HEK293 (cell line): ENCODE measurements at regions of chr10 and their contacts with region 1.

Region 1: DNA sequence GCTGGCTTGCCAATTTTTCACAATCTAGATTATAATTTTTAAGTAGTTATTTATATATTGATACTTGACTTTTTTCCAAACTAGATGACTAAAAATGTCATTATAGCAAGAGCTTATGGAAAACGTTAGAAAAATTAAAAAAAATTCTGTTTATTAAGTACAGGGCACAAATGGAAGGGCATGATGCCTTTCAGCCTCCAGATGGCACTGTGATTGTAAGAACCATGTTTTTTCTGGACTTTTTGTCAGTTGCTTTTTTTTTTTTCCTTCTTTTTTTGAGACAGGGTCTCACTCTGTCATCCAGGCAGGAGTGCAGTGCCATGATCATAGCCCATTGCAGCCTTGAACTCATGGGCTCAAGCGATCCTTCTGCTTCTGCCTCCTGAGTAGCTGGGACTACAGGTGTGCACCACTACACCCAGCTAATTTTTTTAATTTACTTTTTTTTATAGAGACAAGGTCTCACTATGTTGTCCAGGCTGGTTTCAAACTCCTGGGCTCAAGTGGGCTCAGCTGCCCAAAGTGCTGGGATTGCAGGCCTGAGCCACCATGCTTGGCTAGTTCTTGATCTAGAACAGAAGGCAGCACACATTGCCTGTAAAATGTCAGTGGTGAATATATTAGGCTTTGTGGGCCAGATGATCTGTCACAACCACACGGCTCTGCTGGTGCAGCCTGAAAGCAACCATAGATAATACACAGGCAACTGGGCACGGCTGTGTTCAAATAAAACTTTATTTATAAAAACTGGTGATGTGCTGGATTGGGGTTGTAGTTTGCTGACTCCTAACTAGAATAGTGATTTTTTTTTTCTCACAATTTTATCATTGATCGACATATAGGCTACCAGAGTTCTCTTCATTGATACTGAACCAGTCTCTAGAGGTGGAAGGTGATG is 27.4 kb downstream of the UCMA start:
- H3K4me3 ChIP-seq: no peak overlapping the region
- H3K27ac ChIP-seq: no peak overlapping the region
- H3K4me1 ChIP-seq: no peaks in the 10 kb centered on the region
- CTCF ChIP-seq: no peak; the same call in 1 of the 2 replicates

Region 2: DNA sequence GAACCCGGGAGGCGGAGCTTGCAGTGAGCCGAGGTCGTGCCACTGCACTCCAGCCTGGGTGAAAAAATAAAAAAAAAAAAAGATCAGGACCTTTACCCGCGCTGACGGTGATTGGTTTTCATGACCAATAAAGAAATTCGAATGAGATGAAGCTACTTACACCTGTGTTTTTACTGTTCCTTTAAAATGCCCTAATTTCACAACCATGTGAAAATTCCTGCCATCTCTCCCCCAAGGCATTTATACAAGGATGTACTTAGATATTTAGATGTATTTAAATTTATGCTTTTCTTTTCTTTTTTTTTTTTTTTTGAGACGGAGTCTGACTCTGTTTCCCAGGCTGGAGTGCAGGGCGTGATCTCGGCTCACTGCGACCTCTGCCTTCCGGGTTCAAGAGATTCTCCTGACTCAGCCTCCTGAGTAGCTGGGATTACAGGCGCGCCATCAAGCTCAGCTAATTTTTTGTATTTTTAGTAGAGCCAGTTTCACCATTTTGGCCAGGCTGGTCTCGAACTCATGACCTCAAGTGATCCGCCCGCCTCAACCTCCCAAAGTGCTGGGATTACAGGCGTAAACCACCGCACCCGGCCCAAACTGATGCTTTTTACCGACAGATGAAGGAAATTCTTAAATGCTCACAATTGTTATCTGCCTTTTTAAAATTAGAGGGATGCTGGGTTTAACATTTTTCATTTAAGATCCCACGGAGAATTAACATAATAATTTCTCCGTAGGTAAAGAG is 96.2 kb after region 1 on chr10:
- CTCF ChIA-PET with region 1: interaction called, 16 read pairs
- POLR2A ChIA-PET with region 1: no interaction called
- H3K4me3 ChIP-seq: no peak overlapping the region
- H3K27ac ChIP-seq: no peak overlapping the region
- H3K4me1 ChIP-seq: no peaks in the 10 kb centered on the region
- CTCF ChIP-seq: no peak

Region 3: DNA sequence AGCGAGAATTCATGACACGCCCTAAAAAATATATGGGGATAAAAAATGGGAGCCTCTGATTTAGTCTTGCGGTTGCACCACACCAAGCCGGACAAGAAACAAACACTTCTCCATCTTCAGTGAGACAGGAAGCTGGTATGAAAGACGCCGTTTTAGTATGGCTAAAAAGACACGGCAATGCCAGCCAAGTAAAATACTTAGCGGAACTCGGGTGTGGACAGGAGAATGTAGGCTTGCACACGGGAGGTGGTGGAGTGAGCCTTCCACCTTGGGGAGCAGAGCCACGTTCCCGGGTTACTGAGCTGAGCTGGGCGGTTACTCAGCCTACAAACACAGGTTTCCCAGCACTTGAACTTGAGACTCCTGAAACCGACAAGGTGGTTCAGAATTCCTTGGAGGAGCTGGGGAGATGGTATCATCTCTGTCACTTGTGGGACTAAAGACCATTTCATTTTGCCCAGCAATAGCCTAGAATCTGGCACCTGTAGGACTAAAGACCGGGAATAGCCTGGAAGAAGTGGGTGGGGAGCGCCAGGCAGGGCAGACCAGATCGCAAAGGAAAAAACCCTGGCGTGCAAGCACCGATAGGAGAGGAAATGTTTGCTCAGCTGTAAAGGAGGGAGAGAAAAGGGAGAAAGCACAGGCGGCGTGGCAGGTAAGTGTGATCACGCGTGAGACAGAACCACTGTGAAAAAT is 176.1 kb after region 1 on chr10:
- CTCF ChIA-PET with region 1: no interaction called
- POLR2A ChIA-PET with region 1: no interaction called
- H3K4me3 ChIP-seq: peak overlapping the region; percentile 24
- H3K27ac ChIP-seq: no peak overlapping the region
- H3K4me1 ChIP-seq: peaks cover 4% of the 10 kb centered on the region; the same call in 1 of the 2 replicates
- CTCF ChIP-seq: no peak